AG04450 (cell line): ENCODE measurements at regions of chr20 and their contacts with region 1.

Region 1: DNA sequence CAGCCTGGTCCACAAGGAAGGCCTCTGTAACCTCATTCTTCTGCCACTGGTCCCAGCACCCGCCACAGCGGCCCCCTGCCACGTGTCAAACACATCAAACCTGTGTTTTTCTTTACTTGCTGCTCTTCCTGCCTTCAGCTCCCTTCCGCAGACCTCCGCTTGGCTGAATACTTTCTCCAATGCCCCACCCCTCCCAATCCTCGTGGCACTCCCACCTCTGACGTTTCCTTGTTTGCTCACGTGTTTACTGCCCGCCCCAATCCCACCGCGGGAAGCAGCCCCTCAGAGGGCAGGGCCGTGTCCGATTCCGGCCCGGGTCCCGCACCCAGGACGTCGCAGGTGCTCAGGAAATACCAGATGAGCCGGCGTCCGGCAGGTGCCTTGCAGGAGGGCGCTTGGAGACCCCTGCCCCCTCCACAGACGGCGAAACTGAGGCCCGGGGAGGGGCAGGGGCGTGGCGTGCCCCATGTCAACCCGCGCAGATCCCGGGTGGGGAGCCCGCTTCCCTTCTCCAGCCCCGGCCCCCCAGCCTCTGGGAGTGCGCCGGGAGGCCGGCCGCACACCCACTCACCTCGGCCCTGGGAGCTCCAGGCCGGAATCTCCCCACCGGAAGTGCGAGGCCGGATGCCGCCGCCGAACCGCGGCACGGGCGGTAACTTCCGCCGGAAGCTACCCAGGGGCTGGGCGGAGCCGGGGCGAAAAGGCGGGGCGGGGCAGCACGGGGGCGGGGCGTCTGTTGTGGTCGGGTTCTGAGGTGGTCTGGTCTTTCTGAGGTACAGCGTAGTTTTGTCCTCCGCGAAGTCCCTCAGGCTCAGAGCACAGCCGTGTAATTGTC is 42.4 kb downstream of the ELMO2 start:
- DNase-seq: peak; percentile 80
- H3K4me3 ChIP-seq: peak overlapping the region; percentile 97
- H3K27ac ChIP-seq: peak overlapping the region; percentile 98
- H3K27me3 ChIP-seq: no peaks in the 10 kb centered on the region
- CTCF ChIP-seq: no peak

Region 2: DNA sequence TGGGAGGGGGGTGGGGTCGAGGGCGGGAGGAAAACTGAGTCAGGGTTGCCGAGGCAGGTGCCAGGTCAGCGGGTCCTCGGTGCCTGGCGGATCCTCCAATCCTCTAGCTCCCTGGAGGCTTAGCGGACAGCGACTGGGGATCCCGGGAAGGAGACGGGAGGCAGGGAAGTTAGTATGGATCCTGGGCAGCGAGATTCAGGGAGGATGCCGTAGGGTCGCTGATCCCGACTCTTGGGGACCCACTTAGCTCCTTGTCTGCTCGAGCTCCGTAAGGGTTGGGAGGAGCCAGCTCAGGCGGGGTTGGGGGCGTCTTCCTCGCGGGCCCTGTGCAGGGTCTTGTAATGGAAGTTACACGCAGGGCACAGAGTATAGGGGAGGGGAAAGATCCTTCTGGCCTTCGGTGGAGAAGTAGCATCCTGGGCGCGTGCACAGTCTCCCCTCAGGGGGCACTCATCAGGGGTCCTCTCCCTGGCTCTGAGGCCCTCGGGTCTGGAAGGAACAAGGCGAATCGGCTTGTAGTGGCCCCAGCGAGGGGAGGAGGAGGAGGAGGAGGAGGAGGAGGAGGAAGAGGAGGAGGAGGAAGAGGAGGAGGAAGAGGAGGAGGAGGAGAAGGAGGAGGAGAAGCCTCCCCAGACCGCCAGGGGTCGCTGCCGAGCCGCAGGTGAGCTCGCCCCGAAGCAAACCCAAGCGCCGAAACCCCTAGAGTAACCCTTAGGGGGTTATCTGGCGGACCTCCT is 341.4 kb before region 1 on chr20:
- CTCF ChIA-PET with region 1: no interaction called
- POLR2A ChIA-PET with region 1: no interaction called
- DNase-seq: no peak
- H3K4me3 ChIP-seq: peak overlapping the region; percentile 7; the same call in 1 of the 2 replicates
- H3K27ac ChIP-seq: no peak overlapping the region
- H3K27me3 ChIP-seq: peaks cover 49% of the 10 kb centered on the region
- CTCF ChIP-seq: peak; percentile 71

Region 3: GRCh38 chr20:46406199-46406985 is 42.4 kb after region 1 on chr20 and contains the start of gene ELMO2:
- CTCF ChIA-PET with region 1: no interaction called
- POLR2A ChIA-PET with region 1: interaction called, 18 read pairs
- DNase-seq: peak; percentile 90
- H3K4me3 ChIP-seq: peak within 1 kb of the TSS; percentile 80
- H3K27ac ChIP-seq: peak within 1 kb of the TSS; percentile 70
- H3K27me3 ChIP-seq: peaks cover under 1% of the 10 kb centered on the region
- CTCF ChIP-seq: no peak
- polyA plus RNA-seq, gene ELMO2: 34.4 and 39.2 TPM in 2 replicates

Region 4: DNA sequence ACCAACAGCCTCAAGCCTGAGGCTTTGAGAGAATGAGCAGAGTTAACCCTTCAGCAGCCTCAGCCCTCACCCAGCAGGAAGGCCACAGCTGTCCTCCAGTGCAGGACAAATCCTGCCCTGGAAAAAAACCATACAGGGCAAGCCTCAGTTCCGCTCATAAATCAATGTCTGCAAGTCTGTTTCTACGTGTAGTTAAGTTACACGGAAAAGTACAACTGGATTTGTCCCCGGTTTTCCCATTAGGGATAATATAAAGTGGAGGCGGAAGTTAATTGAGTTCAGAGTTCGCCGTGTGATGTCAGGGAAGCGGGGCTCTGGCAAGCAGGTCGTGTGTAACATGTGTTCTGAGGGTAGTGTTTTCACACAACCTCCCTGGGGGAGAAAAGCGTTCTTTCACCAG is 486.4 kb after region 1 on chr20:
- CTCF ChIA-PET with region 1: no interaction called
- POLR2A ChIA-PET with region 1: no interaction called
- DNase-seq: no peak
- H3K4me3 ChIP-seq: no peak overlapping the region
- H3K27ac ChIP-seq: no peak overlapping the region
- H3K27me3 ChIP-seq: peaks cover 2% of the 10 kb centered on the region
- CTCF ChIP-seq: no peak